ENCODE measurements at regions of chrX and their contacts with region 1.

Region 1: GRCh38 chrX:154712781-154713740 is 37.8 kb downstream of the GAB3 start:
- DNase-seq: peak; percentile 69
- ATAC-seq: peak; percentile 94
- H3K4me3 Mint-ChIP-seq: peak overlapping the region; percentile 64
- H3K27ac Mint-ChIP-seq: peak overlapping the region; percentile 89
- H3K4me1 Mint-ChIP-seq: peaks cover 72% of the 10 kb centered on the region
- H3K27me3 Mint-ChIP-seq: no peaks in the 10 kb centered on the region

Region 2: DNA sequence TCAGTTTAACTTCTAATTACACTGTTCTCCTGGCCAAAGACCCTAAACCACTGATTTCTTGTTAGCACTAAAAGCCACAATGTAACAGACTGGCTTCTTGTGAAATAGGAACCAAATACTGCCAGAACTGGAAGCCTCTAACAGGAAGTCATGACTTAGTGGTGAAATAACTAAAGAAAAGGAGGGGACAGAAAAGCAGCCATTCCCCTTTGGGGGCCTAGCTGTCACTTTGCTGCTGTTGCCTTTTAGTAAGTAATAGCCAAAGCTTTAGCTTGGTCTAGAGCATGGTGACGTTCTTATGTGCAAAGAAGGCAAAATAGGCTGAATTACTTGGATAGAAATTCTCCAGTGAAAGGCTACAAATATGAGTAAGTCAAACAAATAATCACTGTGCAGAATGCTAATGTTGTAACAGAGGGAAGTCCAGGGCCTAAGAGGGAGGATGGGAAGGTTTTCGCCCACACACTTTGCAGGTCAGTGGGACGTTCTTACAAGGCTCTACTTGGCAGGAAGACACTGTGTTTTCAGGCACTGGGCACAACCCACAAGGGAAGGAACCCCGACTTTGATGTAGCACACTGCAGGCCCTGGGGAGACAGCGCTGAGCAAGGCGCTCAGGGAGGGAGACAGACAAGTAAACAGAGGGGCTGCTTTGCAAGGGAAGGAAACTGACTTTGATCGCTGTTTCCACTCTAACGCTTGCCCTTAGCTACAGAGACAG is 21.2 kb after region 1 on chrX:
- CTCF ChIA-PET with region 1: interaction called, 26 read pairs
- DNase-seq: peak; percentile 63
- ATAC-seq: peak; percentile 62
- H3K4me3 Mint-ChIP-seq: peak overlapping the region; percentile 74
- H3K27ac Mint-ChIP-seq: peak overlapping the region; percentile 99
- H3K4me1 Mint-ChIP-seq: peaks cover 95% of the 10 kb centered on the region
- H3K27me3 Mint-ChIP-seq: no peaks in the 10 kb centered on the region

Region 3: DNA sequence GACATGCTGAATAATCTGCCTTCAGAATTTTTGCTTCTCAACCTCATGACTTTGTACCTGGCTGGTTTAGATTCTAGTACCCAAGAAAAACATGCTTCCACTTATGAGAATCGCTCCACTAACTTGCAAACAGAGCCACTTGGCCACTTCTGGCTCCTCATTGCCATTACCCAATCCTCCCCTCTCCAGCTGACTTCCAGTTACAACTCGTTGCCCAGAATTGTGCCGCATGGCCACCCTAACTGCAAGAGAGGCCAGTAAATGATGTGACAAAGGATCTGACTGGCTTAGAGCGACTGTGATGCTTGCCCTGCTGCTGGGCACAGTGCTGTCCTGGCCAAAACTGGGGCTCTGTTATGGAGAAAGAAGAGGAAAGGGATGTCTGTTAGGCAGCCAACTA is 45.6 kb after region 1 on chrX:
- CTCF ChIA-PET with region 1: no interaction called
- DNase-seq: no peak
- ATAC-seq: no peak
- H3K4me3 Mint-ChIP-seq: no peak overlapping the region
- H3K27ac Mint-ChIP-seq: no peak overlapping the region
- H3K4me1 Mint-ChIP-seq: peaks cover 18% of the 10 kb centered on the region
- H3K27me3 Mint-ChIP-seq: no peaks in the 10 kb centered on the region

Region 4: GRCh38 chrX:154961947-154962346 is 248.9 kb after region 1 on chrX:
- CTCF ChIA-PET with region 1: no interaction called
- DNase-seq: no peak
- ATAC-seq: no peak
- H3K4me3 Mint-ChIP-seq: no peak overlapping the region
- H3K27ac Mint-ChIP-seq: no peak overlapping the region
- H3K4me1 Mint-ChIP-seq: no peaks in the 10 kb centered on the region
- H3K27me3 Mint-ChIP-seq: peaks cover 10% of the 10 kb centered on the region

Measured in activated CD8-positive, alpha-beta memory T cell treated with anti-CD3 and anti-CD28 coated beads, Interleukin-2, amount 10 ng/mL, durations not matched to agents 7 days and 5 days (primary cell).